Left ventricle myocardium superior (tissue), 1 donor: ENCODE measurements at regions of chr15 and their contacts with region 1.

Region 1: DNA sequence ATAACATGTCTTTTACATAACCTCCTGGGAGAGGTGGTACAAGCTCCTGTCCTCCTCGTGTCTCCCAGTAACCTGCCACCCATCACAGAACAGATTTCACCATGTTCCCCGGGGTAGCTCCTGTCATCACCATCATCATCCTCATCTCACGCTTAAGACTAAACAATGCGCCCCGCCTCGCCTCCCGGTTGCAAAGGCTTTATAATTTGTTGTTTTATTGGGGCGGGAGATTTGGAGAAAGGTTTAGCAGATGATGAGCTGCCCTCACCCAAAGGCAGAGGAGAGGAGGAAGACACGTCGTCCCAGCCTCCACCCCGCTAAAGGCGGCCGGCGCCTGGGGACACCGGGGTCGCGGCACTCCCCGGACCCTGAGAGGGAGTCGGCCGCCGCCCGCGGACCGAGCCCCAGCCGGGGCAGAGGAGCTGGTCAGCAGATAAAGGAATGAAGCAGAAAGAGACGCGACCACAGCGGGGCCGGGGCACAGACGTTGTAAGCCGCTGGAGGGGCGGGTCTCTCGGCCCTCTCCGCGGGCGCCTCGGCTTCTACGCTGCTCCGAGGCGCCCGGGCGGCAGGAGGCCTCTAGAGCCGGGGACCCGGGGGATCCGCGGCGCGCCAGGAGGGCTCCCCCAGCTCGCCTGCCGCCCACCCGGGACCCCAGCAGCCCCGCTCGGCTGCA is 589 bp downstream of the HERC1 start:
- DNase-seq: peak; percentile 63
- ATAC-seq: peak; percentile 76

Region 2: DNA sequence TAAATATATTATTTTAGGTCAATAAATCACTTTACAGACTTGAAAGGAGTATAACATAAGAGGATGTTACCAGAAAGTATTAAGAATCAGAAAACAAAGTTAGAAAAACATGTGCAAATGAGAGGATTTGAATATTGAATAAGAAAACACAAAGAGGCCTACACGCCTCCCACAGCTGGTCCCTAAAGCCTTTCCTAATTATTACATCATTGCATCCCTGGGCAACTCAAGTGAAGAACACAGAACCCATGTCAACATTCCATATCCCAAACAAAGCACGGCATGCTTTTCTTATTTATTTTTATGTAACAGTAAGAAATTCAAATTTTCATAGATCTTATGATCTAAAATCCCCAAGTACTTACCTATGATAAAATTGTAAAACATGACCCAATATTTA is 60.6 kb before region 1 on chr15:
- intact Hi-C with region 1: no loop called
- DNase-seq: no peak
- ATAC-seq: no peak

Region 3: GRCh38 chr15:63881431-63881830 is 48.3 kb after region 1 on chr15:
- intact Hi-C with region 1: loop called (anchors 10 kb)
- DNase-seq: no peak
- ATAC-seq: no peak

Region 4: DNA sequence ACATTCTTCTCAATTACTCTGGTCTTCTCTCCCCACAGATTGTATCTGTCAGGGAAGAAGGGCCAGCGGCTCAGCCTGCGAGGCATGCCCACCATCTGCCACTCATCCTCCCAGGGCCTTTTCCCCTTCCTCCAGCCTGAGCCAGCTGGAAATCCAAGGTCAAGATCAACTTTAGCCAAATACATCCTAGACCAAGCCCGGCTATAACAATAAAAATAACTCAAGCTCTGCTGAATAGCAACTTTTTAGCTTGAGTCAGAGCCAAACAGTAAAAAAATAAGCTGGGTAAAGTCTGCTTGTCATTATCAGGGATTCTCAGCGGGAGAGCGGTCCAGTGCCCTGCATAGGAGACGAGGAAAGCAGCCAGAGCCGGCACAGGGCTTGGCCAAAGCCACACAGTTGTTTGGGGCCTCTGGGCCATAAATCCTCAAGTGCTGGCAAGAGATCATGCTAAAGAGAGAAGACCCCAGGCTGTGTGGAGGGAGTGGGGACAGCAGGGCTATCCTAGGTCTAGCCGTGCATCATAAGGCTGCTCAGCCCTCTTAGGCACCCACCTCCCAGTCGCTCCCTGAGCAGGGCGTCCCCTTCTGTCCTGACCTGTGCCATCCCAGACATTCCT is 76.8 kb after region 1 on chr15:
- intact Hi-C with region 1: no loop called
- DNase-seq: no peak
- ATAC-seq: peak; percentile 28

Region 5: DNA sequence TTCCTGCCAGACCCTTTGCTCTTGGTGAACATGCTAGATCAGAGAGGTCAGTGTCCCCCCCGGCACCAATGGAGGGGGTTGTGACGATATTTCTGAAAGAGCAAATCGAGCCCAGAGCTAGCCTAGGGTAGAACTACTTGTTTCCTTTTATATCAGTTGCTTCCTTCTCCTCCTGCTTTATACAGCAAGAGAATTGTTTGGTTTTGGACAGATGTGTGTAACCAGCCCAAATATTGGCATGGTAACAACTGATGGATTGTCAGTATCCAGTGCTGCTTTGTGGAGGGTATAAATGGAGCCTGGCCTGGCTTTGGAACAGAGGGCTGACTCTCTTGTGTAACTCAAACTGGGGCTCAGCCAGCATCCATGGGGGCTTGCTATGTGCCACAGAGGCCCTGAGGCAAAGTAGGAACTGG is 289.8 kb after region 1 on chr15:
- intact Hi-C with region 1: no loop called
- DNase-seq: no peak
- ATAC-seq: peak; percentile 58